Activated T-helper 1 cell treated with anti-CD3 and anti-CD28 coated beads, Interleukin-12 subunit alpha, Interleukin-12 subunit beta, Interleukin-2, Interleukin-4 antibody, amounts not matched to agents 30 ng/mL and 10 ng/mL and 1 ng/mL, durations not matched to agents 14 hours and 24 hours and 36 hours (primary cell): ENCODE measurements at regions of chr7 and their contacts with region 1.

Region 1: DNA sequence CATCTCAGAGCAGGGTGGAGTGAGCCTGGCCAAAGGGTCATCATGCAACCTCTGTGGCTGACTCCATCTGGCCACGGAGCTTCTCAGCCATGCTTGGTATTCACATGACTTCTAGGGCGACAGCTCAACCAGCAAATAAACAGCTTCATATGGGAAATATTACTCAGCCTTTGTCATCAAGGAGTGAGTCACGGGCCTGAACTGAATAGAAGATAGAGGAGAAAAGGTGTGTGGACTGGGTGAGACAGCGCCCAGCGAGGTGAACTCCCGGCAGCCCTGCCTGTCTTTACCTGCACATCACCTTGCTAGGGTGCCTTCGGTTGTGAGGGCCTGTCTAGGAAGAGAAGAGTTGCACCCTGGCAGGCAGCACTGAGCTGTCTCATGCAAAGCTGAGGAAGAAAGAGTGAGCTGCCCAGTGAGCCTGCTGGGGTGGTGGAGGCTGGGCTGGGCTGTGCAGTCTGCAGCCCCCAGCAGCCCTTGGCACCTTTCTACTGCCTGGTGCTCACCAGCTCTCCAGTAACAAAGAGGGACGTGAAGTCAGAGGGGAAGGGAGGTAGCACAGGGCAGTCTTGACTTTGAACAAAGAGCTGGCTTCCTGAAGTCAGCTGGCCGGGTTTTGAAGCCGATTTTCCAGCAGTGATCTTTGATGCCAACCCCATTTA is 114.2 kb downstream of the EGFR start:
- DNase-seq: no peak
- H3K4me3 Mint-ChIP-seq: no peak overlapping the region
- H3K27ac Mint-ChIP-seq: peak overlapping the region; percentile 37
- H3K4me1 Mint-ChIP-seq: peaks cover 22% of the 10 kb centered on the region
- H3K27me3 Mint-ChIP-seq: peaks cover 4% of the 10 kb centered on the region

Region 2: GRCh38 chr7:54773472-54774399 is 359.3 kb before region 1 on chr7:
- intact Hi-C with region 1: no loop called
- DNase-seq: peak; percentile 53
- H3K4me3 Mint-ChIP-seq: peak overlapping the region; percentile 70
- H3K27ac Mint-ChIP-seq: no peak overlapping the region
- H3K4me1 Mint-ChIP-seq: peaks cover 12% of the 10 kb centered on the region
- H3K27me3 Mint-ChIP-seq: peaks cover 27% of the 10 kb centered on the region

Region 3: GRCh38 chr7:55086413-55087201 is 46.4 kb before region 1 on chr7:
- intact Hi-C with region 1: loop called (anchors 2 kb)
- DNase-seq: no peak
- H3K4me3 Mint-ChIP-seq: peak overlapping the region; percentile 52
- H3K27ac Mint-ChIP-seq: peak overlapping the region; percentile 51
- H3K4me1 Mint-ChIP-seq: peaks cover 25% of the 10 kb centered on the region
- H3K27me3 Mint-ChIP-seq: peaks cover 29% of the 10 kb centered on the region

Region 4: DNA sequence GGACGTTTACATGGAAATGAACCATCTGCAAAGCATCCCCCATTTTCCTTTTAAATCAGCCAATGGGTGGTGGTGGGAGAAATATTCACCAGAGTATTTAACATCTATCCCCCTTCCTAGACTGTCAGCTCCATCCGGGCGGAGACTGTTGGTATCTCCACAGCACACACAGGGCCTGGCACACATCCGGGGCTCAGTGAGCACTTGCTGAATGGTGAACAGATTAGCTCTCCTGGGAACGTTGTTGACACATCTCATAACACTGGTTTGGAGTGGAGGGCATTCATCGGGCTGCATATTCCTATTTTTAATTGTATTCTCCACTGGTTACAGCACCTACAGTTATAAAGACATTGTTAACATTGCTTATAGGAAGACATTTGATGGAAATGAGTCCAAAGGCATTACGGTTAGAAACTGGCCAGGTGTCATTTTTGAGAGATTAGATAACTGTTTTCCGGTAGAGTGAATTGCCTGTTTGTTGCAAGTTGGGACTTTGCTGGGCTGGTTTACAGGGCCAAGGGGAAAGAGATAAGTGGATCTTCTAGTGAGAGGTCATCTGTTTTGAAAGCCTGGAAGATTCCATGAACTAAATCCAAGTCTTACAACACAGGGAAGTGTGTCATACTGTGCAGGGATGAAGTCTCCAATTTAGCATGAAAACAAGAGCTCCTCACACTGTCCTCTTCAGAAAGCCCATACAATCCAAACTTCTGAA is 12.4 kb before region 1 on chr7:
- intact Hi-C with region 1: no loop called
- DNase-seq: no peak
- H3K4me3 Mint-ChIP-seq: no peak overlapping the region
- H3K27ac Mint-ChIP-seq: no peak overlapping the region
- H3K4me1 Mint-ChIP-seq: no peaks in the 10 kb centered on the region
- H3K27me3 Mint-ChIP-seq: peaks cover 17% of the 10 kb centered on the region

Region 5: DNA sequence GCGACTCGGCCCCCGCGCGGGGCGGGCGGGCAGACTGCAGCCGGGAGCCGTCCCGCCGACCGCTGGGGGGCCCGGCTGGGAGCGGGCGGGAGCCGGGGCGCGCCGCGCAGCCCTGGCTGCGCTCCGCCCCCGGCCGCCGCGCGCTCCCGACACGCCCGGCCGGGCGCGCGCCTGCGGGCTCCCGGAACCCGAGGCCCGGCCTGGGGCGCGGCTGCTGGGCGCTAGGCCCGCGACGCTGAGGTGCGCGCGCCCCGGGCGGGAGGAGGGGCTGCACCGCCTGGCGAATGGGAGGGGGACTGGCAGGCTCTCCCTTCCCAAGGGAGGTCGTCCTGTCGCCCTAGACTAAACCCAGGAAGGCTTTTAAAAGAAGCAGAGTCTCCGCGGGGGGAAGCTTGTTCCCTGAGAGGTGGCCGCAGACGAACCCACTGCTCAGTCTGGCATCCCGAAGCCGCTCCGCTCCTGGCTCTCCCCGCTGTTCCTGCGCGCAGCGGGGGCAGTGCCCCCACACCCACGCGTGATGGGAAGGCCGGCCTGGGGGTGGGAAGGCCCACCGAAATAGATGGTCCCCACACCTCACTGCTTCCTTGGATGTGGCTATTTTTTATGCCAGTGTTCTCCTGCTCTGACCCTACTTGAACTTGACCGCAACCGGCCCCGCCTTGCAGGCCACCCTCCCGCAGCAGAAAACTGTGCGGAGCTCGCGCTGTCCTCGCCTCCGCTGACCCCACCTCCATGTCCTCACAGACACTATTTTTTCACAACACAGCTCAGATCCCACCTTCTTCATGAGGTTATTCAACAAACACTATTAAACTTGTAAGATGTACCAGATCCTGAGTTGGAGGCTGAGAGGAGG is 439.6 kb after region 1 on chr7 and contains the start of gene VOPP1:
- intact Hi-C with region 1: no loop called
- DNase-seq: peak; percentile 57
- H3K4me3 Mint-ChIP-seq: peak within 1 kb of the TSS; percentile 94
- H3K27ac Mint-ChIP-seq: peak within 1 kb of the TSS; percentile 92
- H3K4me1 Mint-ChIP-seq: peaks cover 68% of the 10 kb centered on the region
- H3K27me3 Mint-ChIP-seq: no peaks in the 10 kb centered on the region
- total RNA-seq, gene VOPP1: 96.3 and 102 TPM in 2 replicates